ENCODE measurements at regions of chr14 and their contacts with region 1.

Region 1: GRCh38 chr14:33578461-33579216 is 372.2 kb downstream of the EGLN3 start:
- DNase-seq: no peak
- ATAC-seq: no peak
- H3K4me3 ChIP-seq: no peak overlapping the region
- H3K27ac ChIP-seq: no peak overlapping the region
- H3K4me1 ChIP-seq: no peaks in the 10 kb centered on the region
- H3K27me3 ChIP-seq: no peaks in the 10 kb centered on the region
- CTCF ChIP-seq: no peak
- EP300 ChIP-seq: no peak
- POLR2A ChIP-seq: no peak
- RAD21 ChIP-seq: no peak

Region 2: GRCh38 chr14:33475623-33476022 is 103.0 kb before region 1 on chr14:
- CTCF ChIA-PET with region 1: interaction called, 13 read pairs
- POLR2A ChIA-PET with region 1: no interaction called
- RAD21 ChIA-PET with region 1: no interaction called
- SMC1A ChIA-PET with region 1: interaction called, 7 read pairs
- in situ Hi-C with region 1: no loop called
- intact Hi-C with region 1: no loop called
- DNase-seq: no peak
- ATAC-seq: peak; percentile 77
- H3K4me3 ChIP-seq: no peak overlapping the region
- H3K27ac ChIP-seq: no peak overlapping the region
- H3K4me1 ChIP-seq: no peaks in the 10 kb centered on the region
- H3K27me3 ChIP-seq: no peaks in the 10 kb centered on the region
- CTCF ChIP-seq: peak; percentile 40 to 56 (median 46); a peak in 5 of 6 replicates
- EP300 ChIP-seq: no peak
- POLR2A ChIP-seq: no peak
- RAD21 ChIP-seq: peak; percentile 35; the same call in 1 of the 2 replicates

Region 3: DNA sequence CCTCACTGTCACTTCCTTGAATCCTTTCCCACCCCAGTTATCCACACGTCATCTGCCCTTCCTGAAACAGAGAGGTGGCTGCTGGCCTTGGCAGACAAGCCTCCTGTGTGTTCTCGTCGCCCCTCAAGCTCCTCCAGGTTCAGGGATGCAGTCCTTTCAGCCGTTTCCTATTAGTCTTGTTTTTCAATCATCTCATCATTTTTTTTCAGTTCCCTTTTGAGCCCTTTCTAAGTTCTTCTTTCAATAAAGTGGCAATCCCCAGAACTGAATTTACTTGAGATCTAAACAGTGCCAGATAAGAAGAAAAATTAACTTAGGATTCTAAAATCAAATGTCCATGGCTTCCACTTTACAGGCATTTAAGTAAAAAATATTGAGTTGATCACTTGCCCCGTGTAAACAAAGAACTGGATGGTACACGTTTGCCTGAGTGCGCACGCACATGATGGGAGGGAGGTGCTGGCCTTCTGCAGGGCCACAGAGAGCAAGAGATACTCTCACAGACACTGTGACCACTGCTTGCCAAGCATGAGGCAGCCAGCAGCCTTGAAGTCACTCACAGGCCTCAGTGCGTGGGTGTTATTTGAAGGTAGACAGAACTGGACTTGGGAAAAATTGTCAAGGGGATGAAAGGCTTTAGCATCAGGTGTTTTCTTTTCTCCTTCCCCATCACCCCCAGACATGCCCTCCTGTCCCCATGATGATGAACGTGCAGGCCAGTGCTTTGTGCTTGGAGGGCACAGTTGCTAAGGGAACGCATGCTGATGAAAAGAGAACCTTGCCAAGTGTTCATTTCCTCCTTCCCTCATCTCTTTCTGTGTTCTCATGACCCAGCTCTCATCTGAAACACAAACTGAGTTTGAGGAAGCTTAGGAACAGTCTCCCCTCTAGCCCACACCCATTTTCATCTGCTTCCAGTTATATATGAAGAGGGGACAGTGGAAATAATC is 36.0 kb before region 1 on chr14:
- CTCF ChIA-PET with region 1: interaction called, 7 read pairs
- POLR2A ChIA-PET with region 1: interaction called, 16 read pairs
- RAD21 ChIA-PET with region 1: interaction called, 10 read pairs
- SMC1A ChIA-PET with region 1: interaction called, 49 read pairs
- in situ Hi-C with region 1: no loop called
- intact Hi-C with region 1: no loop called
- DNase-seq: no peak
- ATAC-seq: peak; percentile 63
- H3K4me3 ChIP-seq: no peak overlapping the region
- H3K27ac ChIP-seq: no peak overlapping the region
- H3K4me1 ChIP-seq: peaks cover 5% of the 10 kb centered on the region; the same call in 1 of the 2 replicates
- H3K27me3 ChIP-seq: no peaks in the 10 kb centered on the region
- CTCF ChIP-seq: no peak
- EP300 ChIP-seq: no peak
- POLR2A ChIP-seq: no peak
- RAD21 ChIP-seq: no peak

Region 4: GRCh38 chr14:33589326-33589725 is 10.7 kb after region 1 on chr14:
- CTCF ChIA-PET with region 1: interaction called, 5 read pairs
- POLR2A ChIA-PET with region 1: interaction called, 8 read pairs
- RAD21 ChIA-PET with region 1: interaction called, 6 read pairs
- SMC1A ChIA-PET with region 1: interaction called, 103 read pairs
- in situ Hi-C with region 1: no loop called
- intact Hi-C with region 1: no loop called
- DNase-seq: no peak
- ATAC-seq: no peak
- H3K4me3 ChIP-seq: no peak overlapping the region
- H3K27ac ChIP-seq: no peak overlapping the region
- H3K4me1 ChIP-seq: no peaks in the 10 kb centered on the region
- H3K27me3 ChIP-seq: no peaks in the 10 kb centered on the region; a peak in 2 of 4 replicates
- CTCF ChIP-seq: no peak
- EP300 ChIP-seq: no peak
- POLR2A ChIP-seq: no peak
- RAD21 ChIP-seq: no peak

Region 5: DNA sequence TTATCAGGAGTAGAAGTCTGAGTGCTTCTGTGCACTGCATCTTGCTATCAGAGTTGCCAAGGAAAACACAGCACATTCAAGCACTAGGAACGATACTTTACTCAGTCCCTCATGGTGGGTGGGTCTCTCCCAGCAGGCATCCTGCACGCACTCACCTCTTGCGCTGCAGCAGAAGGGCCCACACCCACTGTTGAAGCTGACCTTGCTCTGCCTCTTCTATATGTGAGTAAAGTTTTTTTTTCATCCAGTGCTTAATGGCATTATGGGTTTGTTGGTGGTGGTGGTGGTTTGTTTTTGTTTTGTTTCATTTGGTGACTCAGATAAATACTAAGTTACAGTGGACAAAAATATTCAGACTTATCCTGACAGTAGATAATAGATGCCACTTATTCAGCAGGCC is 23.8 kb after region 1 on chr14:
- CTCF ChIA-PET with region 1: interaction called, 12 read pairs
- POLR2A ChIA-PET with region 1: interaction called, 15 read pairs
- RAD21 ChIA-PET with region 1: interaction called, 44 read pairs
- SMC1A ChIA-PET with region 1: interaction called, 103 read pairs
- in situ Hi-C with region 1: no loop called
- intact Hi-C with region 1: no loop called
- DNase-seq: no peak
- ATAC-seq: no peak
- H3K4me3 ChIP-seq: no peak overlapping the region
- H3K27ac ChIP-seq: no peak overlapping the region
- H3K4me1 ChIP-seq: no peaks in the 10 kb centered on the region
- H3K27me3 ChIP-seq: no peaks in the 10 kb centered on the region
- CTCF ChIP-seq: no peak
- EP300 ChIP-seq: no peak
- POLR2A ChIP-seq: no peak
- RAD21 ChIP-seq: no peak

Region 6: GRCh38 chr14:33622496-33622895 is 43.9 kb after region 1 on chr14:
- CTCF ChIA-PET with region 1: interaction called, 3 read pairs
- POLR2A ChIA-PET with region 1: no interaction called
- RAD21 ChIA-PET with region 1: interaction called, 3 read pairs
- SMC1A ChIA-PET with region 1: interaction called, 12 read pairs
- in situ Hi-C with region 1: no loop called
- intact Hi-C with region 1: no loop called
- DNase-seq: no peak
- ATAC-seq: no peak
- H3K4me3 ChIP-seq: no peak overlapping the region
- H3K27ac ChIP-seq: no peak overlapping the region
- H3K4me1 ChIP-seq: no peaks in the 10 kb centered on the region
- H3K27me3 ChIP-seq: no peaks in the 10 kb centered on the region
- CTCF ChIP-seq: no peak
- EP300 ChIP-seq: no peak
- POLR2A ChIP-seq: no peak
- RAD21 ChIP-seq: no peak